ENCODE measurements at regions of chr6 and their contacts with region 1.

Region 1: GRCh38 chr6:28425944-28426541 is 17.2 kb downstream of the ZSCAN23 start:
- DNase-seq: no peak
- ATAC-seq: no peak
- H3K4me3 ChIP-seq: no peak overlapping the region
- H3K27ac ChIP-seq: no peak overlapping the region
- H3K4me1 ChIP-seq: no peaks in the 10 kb centered on the region
- H3K27me3 ChIP-seq: no peaks in the 10 kb centered on the region
- CTCF ChIP-seq: no peak

Region 2: GRCh38 chr6:28335564-28336283 is 90.3 kb before region 1 on chr6 and contains the start of gene ZSCAN31:
- CTCF ChIA-PET with region 1: no interaction called
- POLR2A ChIA-PET with region 1: no interaction called
- in situ Hi-C with region 1: no loop called
- intact Hi-C with region 1: no loop called
- DNase-seq: no peak
- ATAC-seq: peak; percentile 97
- H3K4me3 ChIP-seq: peak within 1 kb of the TSS; percentile 85 to 86
- H3K27ac ChIP-seq: peak within 1 kb of the TSS; percentile 95
- H3K4me1 ChIP-seq: peaks cover 23% of the 10 kb centered on the region
- H3K27me3 ChIP-seq: no peaks in the 10 kb centered on the region
- CTCF ChIP-seq: no peak
- total RNA-seq, gene ZSCAN31: 10.4 TPM

Region 3: GRCh38 chr6:28377879-28378278 is 48.2 kb before region 1 on chr6:
- CTCF ChIA-PET with region 1: no interaction called
- POLR2A ChIA-PET with region 1: interaction called, 10 read pairs
- in situ Hi-C with region 1: no loop called
- intact Hi-C with region 1: no loop called
- DNase-seq: no peak
- ATAC-seq: no peak
- H3K4me3 ChIP-seq: no peak overlapping the region
- H3K27ac ChIP-seq: no peak overlapping the region
- H3K4me1 ChIP-seq: peaks cover 6% of the 10 kb centered on the region; the same call in 1 of the 2 replicates
- H3K27me3 ChIP-seq: no peaks in the 10 kb centered on the region
- CTCF ChIP-seq: no peak

Region 4: DNA sequence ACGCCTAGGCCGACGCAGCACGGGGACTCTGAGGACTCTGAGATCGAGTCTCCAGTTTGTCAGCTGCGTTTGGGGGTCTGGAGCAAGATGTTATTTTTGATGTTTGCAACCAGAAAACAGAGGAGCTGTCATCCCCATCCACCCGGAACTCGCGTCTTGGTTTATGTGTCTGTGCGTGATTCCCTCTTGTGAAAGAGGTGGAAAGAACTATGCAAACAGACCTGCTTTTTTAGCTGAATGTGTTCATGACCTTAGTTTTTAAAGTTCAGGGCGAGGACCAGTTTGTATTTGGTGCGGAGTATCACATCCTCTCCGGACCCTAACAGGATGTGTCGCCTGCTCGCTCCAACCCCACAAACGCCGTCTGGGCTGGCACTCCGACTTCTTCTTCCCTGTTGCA is 53.0 kb after region 1 on chr6:
- CTCF ChIA-PET with region 1: no interaction called
- POLR2A ChIA-PET with region 1: interaction called, 17 read pairs
- in situ Hi-C with region 1: no loop called
- intact Hi-C with region 1: no loop called
- DNase-seq: no peak
- ATAC-seq: no peak
- H3K4me3 ChIP-seq: peak overlapping the region in 1 of 2 experiments; percentile 26; a peak in 2 of 4 replicates
- H3K27ac ChIP-seq: no peak overlapping the region
- H3K4me1 ChIP-seq: peaks cover 8% of the 10 kb centered on the region
- H3K27me3 ChIP-seq: peaks cover 4% of the 10 kb centered on the region; the same call in 1 of the 2 replicates
- CTCF ChIP-seq: no peak

Measured in Panc1 (cell line).